GM12878 (cell line): ENCODE measurements at regions of chr12 and their contacts with region 1.

Region 1: GRCh38 chr12:49515266-49515665 is 23.6 kb upstream of the KCNH3 start:
- DNase-seq: no peak
- ATAC-seq: no peak
- H3K4me3 ChIP-seq: no peak overlapping the region
- H3K27ac ChIP-seq: no peak overlapping the region
- H3K4me1 ChIP-seq: no peaks in the 10 kb centered on the region
- H3K27me3 ChIP-seq: no peaks in the 10 kb centered on the region
- CTCF ChIP-seq: no peak
- EP300 ChIP-seq: no peak
- POLR2A ChIP-seq: no peak
- RAD21 ChIP-seq: no peak

Region 2: GRCh38 chr12:49342066-49342913 is 173.0 kb before region 1 on chr12:
- CTCF ChIA-PET with region 1: interaction called, 17 read pairs
- POLR2A ChIA-PET with region 1: no interaction called
- RAD21 ChIA-PET with region 1: interaction called, 5 read pairs
- SMC1A ChIA-PET with region 1: interaction called, 4 read pairs
- in situ Hi-C with region 1: no loop called
- intact Hi-C with region 1: no loop called
- DNase-seq: no peak
- ATAC-seq: peak; percentile 80
- H3K4me3 ChIP-seq: peak overlapping the region; percentile 8; the same call in 1 of the 2 replicates
- H3K27ac ChIP-seq: no peak overlapping the region
- H3K4me1 ChIP-seq: peaks cover 32% of the 10 kb centered on the region
- H3K27me3 ChIP-seq: peaks cover 24 to 33% of the 10 kb centered on the region in 2 experiments
- CTCF ChIP-seq: peak; percentile 72 to 91 (median 91)
- EP300 ChIP-seq: no peak
- POLR2A ChIP-seq: no peak
- RAD21 ChIP-seq: peak; percentile 44; the same call in 1 of the 2 replicates

Region 3: DNA sequence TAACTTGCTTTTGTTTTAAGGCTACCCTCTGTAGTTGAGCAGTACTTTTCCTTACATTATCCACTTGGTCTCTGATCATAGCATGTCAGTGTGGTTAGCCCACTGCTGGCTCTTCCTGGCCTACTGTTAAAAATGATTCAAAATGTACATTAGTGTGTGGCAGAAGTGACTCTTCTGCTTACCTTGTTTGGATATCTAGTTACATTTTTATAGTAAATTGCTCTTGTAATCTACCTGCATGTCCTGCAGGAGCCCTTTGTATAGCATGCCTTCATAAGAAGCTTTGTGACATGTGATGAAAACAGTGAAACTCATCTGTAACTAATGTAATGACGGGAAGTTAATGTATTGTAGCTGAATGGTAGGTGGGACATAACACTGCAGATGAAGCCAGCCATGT is 139.9 kb before region 1 on chr12:
- CTCF ChIA-PET with region 1: interaction called, 712 read pairs
- POLR2A ChIA-PET with region 1: interaction called, 5 read pairs
- RAD21 ChIA-PET with region 1: interaction called, 33 read pairs
- SMC1A ChIA-PET with region 1: interaction called, 740 read pairs
- in situ Hi-C with region 1: no loop called
- intact Hi-C with region 1: no loop called
- DNase-seq: no peak
- ATAC-seq: peak; percentile 62
- H3K4me3 ChIP-seq: no peak overlapping the region
- H3K27ac ChIP-seq: no peak overlapping the region; the same call in 1 of the 2 replicates
- H3K4me1 ChIP-seq: peaks cover 12% of the 10 kb centered on the region
- H3K27me3 ChIP-seq: no peaks in the 10 kb centered on the region
- CTCF ChIP-seq: no peak
- EP300 ChIP-seq: no peak
- POLR2A ChIP-seq: no peak
- RAD21 ChIP-seq: no peak

Region 4: DNA sequence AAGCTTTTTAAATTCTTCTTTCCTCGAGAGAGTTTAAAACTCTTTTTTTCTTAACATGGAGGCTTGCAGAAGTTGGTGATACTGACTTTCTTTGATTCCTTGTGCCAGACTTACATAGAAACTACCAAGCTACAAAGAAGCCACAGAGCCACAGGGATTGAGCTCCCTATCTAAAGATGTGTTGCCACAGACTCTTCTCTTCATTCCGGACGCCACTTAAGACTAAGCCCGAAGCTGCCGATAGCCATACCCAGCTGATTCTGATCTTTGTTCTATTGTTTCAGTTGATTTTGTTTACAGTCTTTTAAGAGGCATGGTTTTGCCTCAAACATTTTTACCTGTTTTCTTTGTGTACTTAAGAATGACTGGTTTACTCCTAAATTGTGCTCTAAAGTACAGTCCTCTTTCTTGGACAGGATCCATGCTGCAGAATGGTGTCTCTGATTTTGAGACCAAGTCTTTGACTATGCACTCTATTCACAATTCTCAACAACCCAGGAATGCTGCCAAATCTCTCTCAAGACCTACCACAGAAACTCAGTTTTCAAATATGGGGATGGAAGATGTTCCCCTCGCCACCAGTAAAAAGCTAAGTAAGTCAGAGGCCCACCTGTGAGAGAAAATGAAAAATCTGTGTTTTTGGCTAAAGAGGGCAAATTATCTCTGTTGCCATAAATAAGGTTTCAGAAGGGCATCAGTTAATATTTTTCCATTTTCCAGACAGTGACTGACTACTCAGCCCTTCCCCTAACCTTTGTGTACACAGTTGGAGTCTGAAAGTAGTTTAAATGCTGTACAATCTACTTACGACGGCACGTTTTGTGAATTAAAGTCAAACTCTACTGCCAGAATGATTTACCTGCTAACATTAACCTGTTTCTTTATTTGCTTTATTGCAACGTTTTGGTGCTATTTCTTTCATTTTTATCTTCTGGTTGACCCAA is 18.6 kb before region 1 on chr12:
- CTCF ChIA-PET with region 1: interaction called, 14 read pairs
- POLR2A ChIA-PET with region 1: interaction called, 5 read pairs
- RAD21 ChIA-PET with region 1: interaction called, 5 read pairs
- SMC1A ChIA-PET with region 1: interaction called, 43 read pairs
- in situ Hi-C with region 1: no loop called
- intact Hi-C with region 1: no loop called
- DNase-seq: no peak
- ATAC-seq: no peak
- H3K4me3 ChIP-seq: no peak overlapping the region
- H3K27ac ChIP-seq: no peak overlapping the region
- H3K4me1 ChIP-seq: peaks cover 7% of the 10 kb centered on the region; the same call in 1 of the 2 replicates
- H3K27me3 ChIP-seq: no peaks in the 10 kb centered on the region
- CTCF ChIP-seq: no peak
- EP300 ChIP-seq: no peak
- POLR2A ChIP-seq: no peak
- RAD21 ChIP-seq: no peak

Region 5: GRCh38 chr12:49553512-49554088 is 38.3 kb after region 1 on chr12:
- CTCF ChIA-PET with region 1: interaction called, 13 read pairs
- POLR2A ChIA-PET with region 1: no interaction called
- RAD21 ChIA-PET with region 1: interaction called, 3 read pairs
- SMC1A ChIA-PET with region 1: no interaction called
- in situ Hi-C with region 1: no loop called
- intact Hi-C with region 1: no loop called
- DNase-seq: no peak
- ATAC-seq: peak; percentile 79
- H3K4me3 ChIP-seq: no peak overlapping the region
- H3K27ac ChIP-seq: no peak overlapping the region
- H3K4me1 ChIP-seq: no peaks in the 10 kb centered on the region
- H3K27me3 ChIP-seq: peaks cover 0 to 6% of the 10 kb centered on the region in 2 experiments; a peak in 2 of 4 replicates
- CTCF ChIP-seq: peak; percentile 57 to 89 (median 58); a peak in 5 of 6 replicates
- EP300 ChIP-seq: no peak
- POLR2A ChIP-seq: no peak
- RAD21 ChIP-seq: peak; percentile 73

Region 6: GRCh38 chr12:50453874-50454273 is 938.6 kb after region 1 on chr12:
- CTCF ChIA-PET with region 1: no interaction called
- POLR2A ChIA-PET with region 1: no interaction called
- RAD21 ChIA-PET with region 1: no interaction called
- SMC1A ChIA-PET with region 1: no interaction called
- in situ Hi-C with region 1: no loop called
- intact Hi-C with region 1: no loop called
- DNase-seq: no peak
- ATAC-seq: no peak
- H3K4me3 ChIP-seq: no peak overlapping the region
- H3K27ac ChIP-seq: no peak overlapping the region
- H3K4me1 ChIP-seq: no peaks in the 10 kb centered on the region
- H3K27me3 ChIP-seq: no peaks in the 10 kb centered on the region
- CTCF ChIP-seq: no peak
- EP300 ChIP-seq: no peak
- POLR2A ChIP-seq: no peak
- RAD21 ChIP-seq: no peak